Caco-2 (cell line): ENCODE measurements at regions of chr14 and their contacts with region 1.

Region 1: DNA sequence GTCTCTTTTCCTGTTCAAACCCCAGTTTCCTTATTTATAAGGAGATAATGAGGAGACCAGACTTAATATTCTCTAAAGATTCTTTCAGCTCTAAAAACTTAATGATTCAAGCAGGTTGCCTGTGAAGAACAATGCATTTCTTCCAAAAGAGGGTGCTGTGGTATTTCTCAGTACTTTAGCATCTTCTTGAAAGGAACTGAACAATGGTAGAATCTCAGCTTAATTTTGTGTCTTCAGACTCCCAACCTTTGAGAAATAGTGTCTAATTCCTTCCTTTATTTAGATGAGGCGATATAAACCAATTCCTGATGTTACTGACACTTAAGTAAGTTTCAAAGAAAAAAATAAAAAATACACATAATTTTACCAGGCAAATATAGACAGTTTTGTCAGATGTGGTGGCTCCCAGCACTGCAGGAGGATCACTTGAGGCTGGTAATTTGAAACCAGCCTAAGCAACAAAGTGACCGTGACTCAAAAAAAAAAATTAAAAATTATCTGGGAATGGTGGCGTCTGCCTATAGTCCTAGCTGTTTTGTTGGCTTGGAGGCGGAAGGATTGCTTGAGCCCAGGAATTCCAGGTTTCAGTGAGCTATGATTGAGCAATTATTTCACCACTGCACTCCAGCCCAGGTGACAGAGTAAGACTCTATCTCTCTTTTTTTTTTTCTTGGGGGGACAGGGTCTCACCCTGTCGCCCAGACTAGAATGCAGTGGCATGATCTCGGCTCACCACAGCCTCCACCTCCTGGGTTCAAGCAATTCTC is 76.9 kb upstream of the PSMA6 start:
- DNase-seq: peak in 1 of 2 experiments; percentile 36
- H3K4me3 ChIP-seq: no peak overlapping the region
- H3K4me3 Mint-ChIP-seq: no peak overlapping the region
- H3K27ac Mint-ChIP-seq: no peak overlapping the region
- H3K4me1 ChIP-seq: peaks cover 10% of the 10 kb centered on the region
- H3K4me1 Mint-ChIP-seq: peaks cover 8% of the 10 kb centered on the region
- H3K27me3 ChIP-seq: no peaks in the 10 kb centered on the region
- H3K27me3 Mint-ChIP-seq: no peaks in the 10 kb centered on the region
- CTCF ChIP-seq: peak; percentile 41 to 53

Region 2: GRCh38 chr14:35197015-35197414 is 18.3 kb before region 1 on chr14:
- CTCF ChIA-PET with region 1: interaction called, 11 read pairs
- POLR2A ChIA-PET with region 1: no interaction called
- intact Hi-C with region 1: no loop called
- DNase-seq: no peak
- H3K4me3 ChIP-seq: no peak overlapping the region
- H3K4me3 Mint-ChIP-seq: no peak overlapping the region
- H3K27ac Mint-ChIP-seq: no peak overlapping the region
- H3K4me1 ChIP-seq: no peaks in the 10 kb centered on the region
- H3K4me1 Mint-ChIP-seq: no peaks in the 10 kb centered on the region
- H3K27me3 ChIP-seq: no peaks in the 10 kb centered on the region
- H3K27me3 Mint-ChIP-seq: no peaks in the 10 kb centered on the region
- CTCF ChIP-seq: no peak